Endothelial cell of umbilical vein (primary cell): ENCODE measurements at regions of chr6 and their contacts with region 1.

Region 1: GRCh38 chr6:139375232-139376016 is 976 bp upstream of the CITED2 start:
- DNase-seq: peak; percentile 94
- H3K4me3 ChIP-seq: peak overlapping the region; percentile 57 to 93 (median 62)
- H3K27ac ChIP-seq: peak overlapping the region; percentile 89
- H3K4me1 ChIP-seq: peaks cover 24% of the 10 kb centered on the region
- H3K27me3 ChIP-seq: no peaks in the 10 kb centered on the region
- CTCF ChIP-seq: no peak
- POLR2A ChIP-seq: no peak

Region 2: DNA sequence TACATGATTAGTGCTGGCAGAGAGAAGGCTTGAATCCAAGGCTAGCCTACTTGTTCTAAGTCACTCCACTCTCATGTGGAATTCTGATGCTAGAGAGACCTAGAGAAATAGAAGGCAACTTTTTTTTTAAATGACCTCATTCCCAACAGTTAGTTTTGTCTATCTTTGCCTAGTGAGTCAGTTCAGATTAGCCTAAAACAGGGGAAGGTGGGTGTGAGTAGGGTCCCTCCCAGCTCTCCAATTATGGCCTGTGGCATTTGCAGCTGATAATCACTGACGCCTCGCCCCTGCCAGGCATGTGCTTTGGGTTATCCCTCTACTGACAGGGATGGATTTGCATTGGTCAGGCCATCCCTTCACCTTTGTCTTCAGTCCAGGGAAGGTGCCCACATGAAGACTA is 97.2 kb before region 1 on chr6:
- CTCF ChIA-PET with region 1: no interaction called
- POLR2A ChIA-PET with region 1: no interaction called
- dilution Hi-C with region 1: no loop called
- intact Hi-C with region 1: no loop called
- DNase-seq: no peak
- H3K4me3 ChIP-seq: no peak overlapping the region
- H3K27ac ChIP-seq: no peak overlapping the region
- H3K4me1 ChIP-seq: no peaks in the 10 kb centered on the region
- H3K27me3 ChIP-seq: no peaks in the 10 kb centered on the region
- CTCF ChIP-seq: no peak
- POLR2A ChIP-seq: no peak

Region 3: GRCh38 chr6:139409026-139409425 is 33.6 kb after region 1 on chr6:
- CTCF ChIA-PET with region 1: no interaction called
- POLR2A ChIA-PET with region 1: no interaction called
- dilution Hi-C with region 1: no loop called
- intact Hi-C with region 1: no loop called
- DNase-seq: no peak
- H3K4me3 ChIP-seq: no peak overlapping the region
- H3K27ac ChIP-seq: no peak overlapping the region
- H3K4me1 ChIP-seq: no peaks in the 10 kb centered on the region
- H3K27me3 ChIP-seq: no peaks in the 10 kb centered on the region
- CTCF ChIP-seq: no peak
- POLR2A ChIP-seq: no peak

Region 4: GRCh38 chr6:139533573-139534471 is 158.4 kb after region 1 on chr6:
- CTCF ChIA-PET with region 1: interaction called, 3 read pairs
- POLR2A ChIA-PET with region 1: interaction called, 12 read pairs
- dilution Hi-C with region 1: no loop called
- intact Hi-C with region 1: loop called (anchors 1 kb)
- DNase-seq: peak; percentile 79
- H3K4me3 ChIP-seq: no peak overlapping the region
- H3K27ac ChIP-seq: peak overlapping the region; percentile 65
- H3K4me1 ChIP-seq: peaks cover 36% of the 10 kb centered on the region
- H3K27me3 ChIP-seq: no peaks in the 10 kb centered on the region
- CTCF ChIP-seq: no peak
- POLR2A ChIP-seq: no peak

Region 5: DNA sequence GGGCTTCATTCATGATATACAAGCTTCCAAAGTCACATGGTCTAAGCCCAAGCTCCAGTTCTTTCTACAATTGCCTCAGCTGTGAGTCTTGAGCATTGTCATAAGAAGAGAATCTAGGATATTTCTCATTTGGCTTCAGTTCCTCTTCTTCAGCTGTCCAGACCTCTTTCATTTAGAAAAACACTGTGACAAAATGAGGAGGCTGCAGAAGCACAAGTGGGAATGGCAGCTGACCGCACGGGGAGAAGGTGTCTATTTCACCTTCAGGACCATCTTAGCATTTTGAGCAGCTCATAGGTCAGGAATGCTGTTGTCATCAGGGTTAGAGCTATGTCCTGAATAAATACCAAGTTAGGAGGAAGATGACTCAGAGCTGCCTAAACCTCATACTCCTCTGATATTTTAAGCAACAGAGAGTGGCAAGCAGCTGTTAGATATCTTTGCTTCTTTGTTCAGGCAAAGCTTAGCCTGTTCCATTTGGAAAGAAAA is 389.1 kb after region 1 on chr6:
- CTCF ChIA-PET with region 1: interaction called, 20 read pairs
- POLR2A ChIA-PET with region 1: interaction called, 29 read pairs
- dilution Hi-C with region 1: no loop called
- intact Hi-C with region 1: loop called (anchors 1 kb)
- DNase-seq: peak; percentile 91
- H3K4me3 ChIP-seq: no peak overlapping the region
- H3K27ac ChIP-seq: peak overlapping the region; percentile 96
- H3K4me1 ChIP-seq: peaks cover 42% of the 10 kb centered on the region
- H3K27me3 ChIP-seq: no peaks in the 10 kb centered on the region
- CTCF ChIP-seq: no peak
- POLR2A ChIP-seq: peak; percentile 63

Region 6: GRCh38 chr6:139943391-139943790 is 568.0 kb after region 1 on chr6:
- CTCF ChIA-PET with region 1: interaction called, 5 read pairs
- POLR2A ChIA-PET with region 1: no interaction called
- dilution Hi-C with region 1: no loop called
- intact Hi-C with region 1: loop called (anchors 1 kb)
- DNase-seq: peak; percentile 93
- H3K4me3 ChIP-seq: no peak overlapping the region
- H3K27ac ChIP-seq: peak overlapping the region; percentile 90
- H3K4me1 ChIP-seq: peaks cover 24% of the 10 kb centered on the region
- H3K27me3 ChIP-seq: no peaks in the 10 kb centered on the region
- CTCF ChIP-seq: no peak
- POLR2A ChIP-seq: no peak

Region 7: DNA sequence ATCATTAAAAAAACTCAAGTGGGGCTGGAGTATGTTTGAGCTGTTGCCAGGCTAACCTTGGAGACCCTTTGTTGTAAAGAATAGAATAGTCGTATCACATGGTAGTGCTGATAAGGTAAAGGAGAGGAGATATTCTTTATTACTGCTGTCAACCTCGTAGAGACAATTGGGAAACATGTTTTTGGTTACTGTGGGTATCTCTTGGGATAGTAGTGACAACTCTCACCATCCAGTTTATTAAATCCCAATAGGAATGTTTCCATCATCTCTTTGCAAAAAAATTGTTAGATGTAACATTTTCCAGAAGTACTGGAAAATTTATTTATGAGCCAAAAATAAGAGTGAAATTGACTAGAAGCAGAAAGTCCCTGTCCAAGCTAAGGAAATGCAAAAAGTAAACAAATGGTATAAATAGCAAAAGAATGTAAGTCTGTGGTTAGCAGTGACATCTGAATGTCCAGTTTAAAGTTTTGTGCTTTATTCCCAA is 828.3 kb after region 1 on chr6:
- CTCF ChIA-PET with region 1: interaction called, 6 read pairs
- POLR2A ChIA-PET with region 1: interaction called, 4 read pairs
- dilution Hi-C with region 1: no loop called
- intact Hi-C with region 1: loop called (anchors 10 kb)
- DNase-seq: peak; percentile 84
- H3K4me3 ChIP-seq: no peak overlapping the region
- H3K27ac ChIP-seq: peak overlapping the region; percentile 22
- H3K4me1 ChIP-seq: peaks cover 20% of the 10 kb centered on the region
- H3K27me3 ChIP-seq: no peaks in the 10 kb centered on the region
- CTCF ChIP-seq: no peak
- POLR2A ChIP-seq: no peak

Region 8: DNA sequence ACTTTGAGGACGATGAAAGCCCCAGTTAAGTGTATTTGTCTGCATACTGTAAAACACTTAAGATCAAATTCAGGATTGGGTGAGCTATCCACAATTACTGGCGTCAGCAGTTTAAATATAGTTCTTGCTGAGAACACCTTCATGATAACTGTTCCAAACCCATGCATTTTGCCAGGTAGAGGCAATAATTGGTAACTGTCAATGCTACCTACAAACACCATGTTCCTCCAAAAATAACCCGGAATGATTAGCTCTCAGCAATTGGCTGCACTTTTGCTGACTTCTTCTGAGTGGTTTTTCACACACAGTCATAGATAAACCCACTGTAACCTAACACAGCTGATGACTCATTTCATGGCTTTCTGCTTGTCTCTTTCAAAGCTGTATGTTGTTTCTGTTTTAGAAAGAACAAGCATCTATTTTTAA is 1398.7 kb after region 1 on chr6:
- CTCF ChIA-PET with region 1: no interaction called
- POLR2A ChIA-PET with region 1: interaction called, 3 read pairs
- dilution Hi-C with region 1: no loop called
- intact Hi-C with region 1: loop called (anchors 5 kb)
- DNase-seq: peak; percentile 82
- H3K4me3 ChIP-seq: no peak overlapping the region
- H3K27ac ChIP-seq: peak overlapping the region; percentile 20
- H3K4me1 ChIP-seq: peaks cover 18% of the 10 kb centered on the region
- H3K27me3 ChIP-seq: no peaks in the 10 kb centered on the region
- CTCF ChIP-seq: no peak
- POLR2A ChIP-seq: no peak